ENCODE measurements at regions of chr21 and their contacts with region 1.

Region 1: DNA sequence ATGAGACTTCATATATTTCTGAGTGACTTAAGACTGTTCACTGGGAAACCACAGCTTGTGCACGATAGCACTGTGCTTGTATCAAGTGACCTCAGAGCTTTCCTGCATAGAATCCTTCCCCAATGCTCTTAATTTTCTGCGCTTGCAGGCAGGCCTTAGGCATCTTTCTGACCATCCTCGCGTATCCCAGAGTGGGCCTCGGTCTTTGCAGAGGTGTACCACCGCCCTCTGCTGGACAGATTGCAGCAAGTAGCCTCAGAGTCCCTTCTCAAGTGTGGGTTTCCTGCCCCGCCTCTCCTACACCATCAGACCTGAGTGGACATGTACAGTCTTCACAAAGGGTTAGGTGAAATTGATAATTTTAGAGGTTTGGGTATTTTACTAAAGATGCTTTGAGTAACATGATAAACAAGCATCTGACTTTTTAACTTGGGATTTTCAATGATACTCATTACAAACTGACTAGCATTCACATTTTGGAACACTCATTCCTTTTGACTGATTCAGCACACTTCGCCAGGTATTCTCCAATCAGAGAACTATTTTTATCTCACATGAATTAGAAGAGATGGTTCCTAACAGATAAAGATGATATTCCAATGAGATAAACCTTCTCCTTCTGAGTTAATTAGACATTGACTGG is 246.5 kb upstream of the USP25 start:
- DNase-seq: peak; percentile 84
- H3K4me3 ChIP-seq: no peak overlapping the region
- H3K27ac ChIP-seq: no peak overlapping the region
- H3K4me1 ChIP-seq: no peaks in the 10 kb centered on the region
- H3K27me3 ChIP-seq: peaks cover 1 to 6% of the 10 kb centered on the region in 2 experiments
- CTCF ChIP-seq: peak; percentile 88 to 89
- POLR2A ChIP-seq: no peak

Region 2: GRCh38 chr21:14259747-14260146 is 1223.5 kb before region 1 on chr21:
- CTCF ChIA-PET with region 1: interaction called, 3 read pairs
- POLR2A ChIA-PET with region 1: no interaction called
- dilution Hi-C with region 1: no loop called
- intact Hi-C with region 1: loop called (anchors 5 kb)
- DNase-seq: peak; percentile 56
- H3K4me3 ChIP-seq: no peak overlapping the region
- H3K27ac ChIP-seq: no peak overlapping the region
- H3K4me1 ChIP-seq: no peaks in the 10 kb centered on the region
- H3K27me3 ChIP-seq: no peaks in the 10 kb centered on the region
- CTCF ChIP-seq: peak; percentile 22 to 35
- POLR2A ChIP-seq: no peak

Region 3: GRCh38 chr21:14989359-14989758 is 493.9 kb before region 1 on chr21:
- CTCF ChIA-PET with region 1: no interaction called
- POLR2A ChIA-PET with region 1: no interaction called
- dilution Hi-C with region 1: no loop called
- intact Hi-C with region 1: loop called (anchors 10 kb)
- DNase-seq: peak; percentile 20
- H3K4me3 ChIP-seq: no peak overlapping the region
- H3K27ac ChIP-seq: no peak overlapping the region
- H3K4me1 ChIP-seq: no peaks in the 10 kb centered on the region
- H3K27me3 ChIP-seq: no peaks in the 10 kb centered on the region
- CTCF ChIP-seq: no peak
- POLR2A ChIP-seq: no peak

Region 4: DNA sequence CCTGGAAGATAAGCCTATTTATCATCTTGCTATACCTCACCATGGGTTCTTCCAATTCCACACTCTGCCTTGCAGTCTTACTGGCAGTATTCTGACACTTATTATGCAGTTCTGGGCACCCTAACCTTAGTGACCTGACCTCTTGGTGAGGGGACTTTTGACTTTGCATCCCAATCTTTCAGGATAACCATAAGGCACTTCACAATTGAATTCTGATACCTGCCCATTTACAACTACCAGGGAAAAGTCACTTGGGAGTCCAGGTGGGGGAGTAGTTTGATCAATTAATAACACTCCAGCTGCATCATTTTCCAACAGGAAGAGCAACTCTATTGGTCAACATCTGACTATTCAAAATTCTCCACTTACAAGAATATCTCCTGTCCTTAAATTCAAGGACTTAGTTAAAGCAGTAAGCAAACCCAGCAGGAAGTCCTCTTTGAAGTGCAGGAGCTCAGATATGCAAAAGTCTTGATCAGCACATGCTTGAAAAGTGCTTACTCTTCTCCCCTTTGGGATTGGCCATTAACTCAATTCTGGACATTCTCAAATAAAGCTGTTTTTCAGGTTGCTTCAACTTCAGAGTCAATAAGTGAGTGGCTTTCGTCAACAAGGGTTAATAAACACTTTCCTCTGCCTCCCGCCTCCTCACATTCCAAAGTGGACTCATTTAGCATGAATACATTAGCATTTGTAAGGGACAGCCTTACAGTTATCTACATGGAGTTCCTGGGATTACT is 241.1 kb before region 1 on chr21:
- CTCF ChIA-PET with region 1: interaction called, 3 read pairs
- POLR2A ChIA-PET with region 1: no interaction called
- dilution Hi-C with region 1: no loop called
- intact Hi-C with region 1: loop called (anchors 1 kb)
- DNase-seq: peak; percentile 15
- H3K4me3 ChIP-seq: no peak overlapping the region
- H3K27ac ChIP-seq: no peak overlapping the region
- H3K4me1 ChIP-seq: no peaks in the 10 kb centered on the region
- H3K27me3 ChIP-seq: no peaks in the 10 kb centered on the region
- CTCF ChIP-seq: no peak
- POLR2A ChIP-seq: no peak

Region 5: DNA sequence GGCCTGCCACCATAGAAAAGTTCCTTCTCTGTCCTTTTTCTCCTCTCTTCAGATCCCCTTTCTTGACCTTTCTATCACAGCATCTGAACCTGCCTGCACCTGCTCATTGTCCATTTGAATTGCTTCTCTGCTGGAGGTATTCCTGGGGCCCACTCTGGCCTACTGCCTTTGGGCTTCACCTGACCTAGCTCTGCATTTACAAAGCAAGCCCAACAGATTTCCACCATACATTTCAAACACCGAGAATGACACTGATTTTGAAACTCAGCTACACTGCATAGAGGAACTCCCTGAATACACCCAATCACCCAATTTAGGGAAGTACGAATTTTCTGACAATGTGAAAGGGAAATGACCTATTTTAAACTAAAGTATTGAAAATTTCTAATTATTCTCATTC is 37.9 kb before region 1 on chr21:
- CTCF ChIA-PET with region 1: no interaction called
- POLR2A ChIA-PET with region 1: no interaction called
- dilution Hi-C with region 1: no loop called
- intact Hi-C with region 1: no loop called
- DNase-seq: no peak
- H3K4me3 ChIP-seq: no peak overlapping the region
- H3K27ac ChIP-seq: no peak overlapping the region
- H3K4me1 ChIP-seq: no peaks in the 10 kb centered on the region
- H3K27me3 ChIP-seq: no peaks in the 10 kb centered on the region
- CTCF ChIP-seq: no peak
- POLR2A ChIP-seq: no peak

Region 6: DNA sequence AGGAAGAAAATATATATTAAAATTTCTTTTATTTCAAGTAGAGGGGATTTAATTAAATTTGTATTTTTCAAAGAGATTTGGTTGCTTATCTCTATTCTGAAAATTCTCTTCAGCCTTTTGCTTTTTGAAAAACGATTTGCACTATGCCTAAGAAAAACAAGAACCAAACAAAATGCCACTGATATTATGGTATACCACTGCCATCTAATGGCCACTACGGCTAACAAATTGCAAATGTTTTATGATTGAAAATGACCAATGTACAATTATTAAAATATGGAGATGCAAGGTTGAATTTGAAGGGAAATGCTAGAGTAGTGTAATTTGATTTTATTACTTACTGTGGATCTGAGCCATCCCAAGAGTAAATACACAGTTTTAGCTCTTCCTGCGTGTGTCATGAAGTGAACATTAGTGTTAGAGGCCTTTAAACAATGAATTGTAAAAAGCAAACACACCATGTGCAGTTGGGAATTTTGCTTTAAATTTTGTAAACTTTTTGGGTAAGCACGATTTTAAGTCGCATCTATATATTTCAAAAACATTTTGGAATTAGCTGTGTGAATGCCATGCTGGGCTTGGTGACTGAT is 109.1 kb after region 1 on chr21:
- CTCF ChIA-PET with region 1: interaction called, 3 read pairs
- POLR2A ChIA-PET with region 1: no interaction called
- dilution Hi-C with region 1: no loop called
- intact Hi-C with region 1: loop called (anchors 1 kb)
- DNase-seq: peak; percentile 65
- H3K4me3 ChIP-seq: no peak overlapping the region
- H3K27ac ChIP-seq: no peak overlapping the region
- H3K4me1 ChIP-seq: no peaks in the 10 kb centered on the region
- H3K27me3 ChIP-seq: peaks cover 0 to 3% of the 10 kb centered on the region in 2 experiments
- CTCF ChIP-seq: peak; percentile 28 to 39
- POLR2A ChIP-seq: no peak

Region 7: DNA sequence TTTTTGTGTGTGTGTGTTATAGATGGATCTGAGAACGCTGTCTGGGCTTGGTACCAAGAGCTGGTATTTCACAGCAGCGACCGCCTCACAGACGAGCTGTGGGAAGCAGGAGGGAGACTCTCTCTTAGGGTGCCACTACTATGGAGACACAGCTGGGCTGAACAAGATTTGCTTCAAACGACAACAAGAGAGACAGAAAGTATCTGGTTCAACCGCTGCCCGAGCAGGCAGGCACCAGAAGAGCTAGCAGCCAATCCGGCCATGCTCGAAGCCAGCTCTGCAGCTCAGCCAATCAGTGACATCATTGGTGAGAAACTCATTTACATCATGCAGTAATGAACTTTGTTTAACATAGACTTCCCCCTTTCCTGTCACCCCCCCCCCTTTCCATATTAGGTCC is 587.8 kb after region 1 on chr21:
- CTCF ChIA-PET with region 1: no interaction called
- POLR2A ChIA-PET with region 1: no interaction called
- dilution Hi-C with region 1: no loop called
- intact Hi-C with region 1: no loop called
- DNase-seq: no peak
- H3K4me3 ChIP-seq: no peak overlapping the region
- H3K27ac ChIP-seq: no peak overlapping the region
- H3K4me1 ChIP-seq: no peaks in the 10 kb centered on the region
- H3K27me3 ChIP-seq: no peaks in the 10 kb centered on the region
- CTCF ChIP-seq: no peak
- POLR2A ChIP-seq: no peak

Measured in endothelial cell of umbilical vein (primary cell).